Posterior vena cava (tissue), 2 donors: ENCODE measurements at regions of chr10 and their contacts with region 1.

Region 1: GRCh38 chr10:95601116-95601719 is 40.0 kb upstream of the SORBS1 start:
- DNase-seq: peak; percentile 89

Region 2: DNA sequence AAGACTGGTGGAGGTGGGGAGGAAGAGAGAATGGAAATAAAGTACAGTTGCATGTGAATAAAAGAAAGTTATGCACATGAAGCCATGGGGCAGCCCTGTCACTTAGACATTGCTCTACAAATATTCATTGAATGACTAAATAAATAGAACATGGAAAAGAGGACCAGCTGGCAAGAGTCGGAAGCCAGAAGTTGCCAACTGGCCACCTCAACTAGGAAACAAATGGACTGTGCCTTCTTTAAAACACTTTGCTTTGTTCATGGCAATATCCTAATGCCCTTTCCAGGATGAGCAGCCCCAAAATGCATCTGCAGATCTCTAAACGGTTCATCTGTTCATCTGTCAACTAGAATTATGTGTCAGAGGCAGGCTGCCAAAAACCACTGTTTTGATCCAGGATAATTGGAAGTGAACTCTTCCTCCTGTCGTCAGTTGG is 1395.8 kb before region 1 on chr10:
- intact Hi-C with region 1: no loop called
- DNase-seq: no peak

Region 3: DNA sequence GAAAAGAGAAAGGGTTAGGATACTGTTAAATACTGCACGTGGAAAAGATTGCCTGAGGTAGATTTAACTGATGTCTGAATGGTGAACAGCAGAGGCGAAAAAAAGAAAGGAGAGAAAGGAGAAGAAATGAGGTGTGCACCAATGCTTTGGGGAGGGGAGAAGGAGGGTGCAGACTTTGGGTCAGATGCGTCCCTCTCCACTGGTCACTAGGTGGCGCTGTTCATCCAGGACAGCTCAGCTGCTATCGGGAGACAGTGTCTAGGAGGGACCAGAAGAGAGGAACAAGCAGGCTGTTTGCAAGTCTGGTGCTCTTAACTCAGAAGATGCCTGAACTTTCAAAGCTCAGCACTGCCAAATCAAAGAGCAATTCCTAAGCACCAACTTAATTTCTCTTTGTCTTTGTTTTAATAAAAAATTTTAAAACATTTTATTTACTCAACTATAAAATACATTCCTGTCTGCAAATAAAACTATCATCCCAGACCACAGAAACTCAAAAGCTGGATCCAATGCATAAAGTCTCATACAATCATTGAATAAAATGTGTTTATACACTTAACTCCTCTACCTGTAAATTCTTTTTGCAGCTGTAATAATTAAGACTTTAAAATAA is 226.5 kb before region 1 on chr10:
- intact Hi-C with region 1: loop called in 1 of 2 experiments (anchors 5 kb)
- DNase-seq: peak; percentile 91

Region 4: GRCh38 chr10:95430231-95430951 is 170.8 kb before region 1 on chr10:
- intact Hi-C with region 1: loop called in 1 of 2 experiments (anchors 2 kb)
- DNase-seq: no peak

Region 5: GRCh38 chr10:95445837-95446486 is 155.3 kb before region 1 on chr10:
- intact Hi-C with region 1: loop called in 1 of 2 experiments (anchors 10 kb)
- DNase-seq: no peak

Region 6: DNA sequence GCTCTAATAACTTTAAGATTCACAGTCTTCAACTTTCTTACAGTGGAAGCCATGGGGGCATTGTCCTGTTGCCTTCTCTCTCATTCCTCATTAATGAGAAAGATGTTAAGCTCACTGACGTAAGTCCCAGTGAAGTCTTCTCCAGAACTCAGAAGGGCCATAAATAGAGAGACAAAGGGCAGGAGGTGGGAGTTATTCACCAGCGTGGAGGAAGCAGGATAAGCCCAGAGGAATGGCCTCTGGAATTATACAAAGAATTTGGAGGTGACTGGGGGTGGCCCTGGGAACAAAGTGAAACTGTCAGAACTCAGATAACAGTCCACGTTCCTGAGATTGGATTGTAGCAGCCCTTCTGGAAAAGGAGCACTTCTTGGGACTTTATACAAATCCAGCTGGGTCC is 92.5 kb before region 1 on chr10:
- intact Hi-C with region 1: loop called in 1 of 2 experiments (anchors 10 kb)
- DNase-seq: no peak

Region 7: GRCh38 chr10:96118604-96119450 is 517.6 kb after region 1 on chr10:
- intact Hi-C with region 1: no loop called
- DNase-seq: no peak